ENCODE measurements at regions of chr17 and their contacts with region 1.

Region 1: GRCh38 chr17:8409966-8410864 is 12.6 kb upstream of the RNF222 start:
- DNase-seq: peak; percentile 89
- H3K4me3 ChIP-seq: peak overlapping the region; percentile 2 to 30 (median 24)
- H3K27ac ChIP-seq: peak overlapping the region; percentile 31
- H3K4me1 ChIP-seq: peaks cover 16% of the 10 kb centered on the region
- H3K27me3 ChIP-seq: no peaks in the 10 kb centered on the region
- CTCF ChIP-seq: peak; percentile 81 to 87

Region 2: GRCh38 chr17:8091033-8091687 is 319.1 kb before region 1 on chr17:
- CTCF ChIA-PET with region 1: interaction called, 10 read pairs
- dilution Hi-C with region 1: no loop called
- in situ Hi-C with region 1: no loop called
- intact Hi-C with region 1: no loop called
- DNase-seq: no peak
- H3K4me3 ChIP-seq: no peak overlapping the region
- H3K27ac ChIP-seq: no peak overlapping the region
- H3K4me1 ChIP-seq: peaks cover 8% of the 10 kb centered on the region
- H3K27me3 ChIP-seq: no peaks in the 10 kb centered on the region
- CTCF ChIP-seq: no peak

Region 3: DNA sequence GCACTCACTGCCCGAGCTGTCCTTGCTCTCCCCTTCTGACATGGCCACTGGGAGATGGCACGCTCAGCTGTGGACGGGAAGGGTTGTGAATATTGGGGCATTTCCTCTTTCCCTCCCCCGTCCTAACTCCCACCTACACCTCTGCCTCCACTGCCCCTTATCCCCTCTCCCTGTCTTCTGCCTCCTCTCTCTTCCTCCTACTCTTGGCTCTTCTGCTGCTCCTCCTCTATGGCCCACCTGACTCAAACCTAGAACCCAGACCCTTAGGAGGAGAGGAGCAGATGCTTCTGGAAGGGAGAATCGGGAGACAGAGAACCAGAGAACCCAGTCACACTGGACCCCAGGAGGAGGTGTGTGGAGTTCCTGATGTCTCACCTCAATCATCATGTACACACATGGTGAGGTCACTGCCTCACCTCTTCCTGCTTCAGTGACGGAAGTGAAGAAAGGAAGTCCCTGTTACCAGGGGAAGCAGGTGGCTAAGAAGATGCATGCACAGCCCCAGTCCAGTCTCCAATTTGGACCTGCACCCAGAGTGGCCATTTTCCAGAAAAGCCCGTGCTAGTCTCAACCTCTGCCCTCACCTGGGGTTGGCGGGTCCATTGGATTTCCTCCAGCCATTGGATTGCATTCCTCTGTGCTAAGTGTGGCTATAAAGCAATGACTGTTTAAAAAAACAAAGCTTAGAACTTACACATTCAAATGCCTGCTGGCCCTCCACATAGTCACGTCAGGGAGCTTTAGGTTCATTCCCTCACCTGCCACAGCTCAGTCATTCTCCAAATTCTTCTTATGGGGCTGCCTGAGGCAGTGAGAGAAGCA is 16.6 kb before region 1 on chr17:
- CTCF ChIA-PET with region 1: no interaction called
- dilution Hi-C with region 1: no loop called
- in situ Hi-C with region 1: no loop called
- intact Hi-C with region 1: loop called (anchors 2 kb)
- DNase-seq: peak; percentile 84
- H3K4me3 ChIP-seq: no peak overlapping the region
- H3K27ac ChIP-seq: peak overlapping the region; percentile 67
- H3K4me1 ChIP-seq: peaks cover 37% of the 10 kb centered on the region
- H3K27me3 ChIP-seq: no peaks in the 10 kb centered on the region
- CTCF ChIP-seq: no peak

Region 4: DNA sequence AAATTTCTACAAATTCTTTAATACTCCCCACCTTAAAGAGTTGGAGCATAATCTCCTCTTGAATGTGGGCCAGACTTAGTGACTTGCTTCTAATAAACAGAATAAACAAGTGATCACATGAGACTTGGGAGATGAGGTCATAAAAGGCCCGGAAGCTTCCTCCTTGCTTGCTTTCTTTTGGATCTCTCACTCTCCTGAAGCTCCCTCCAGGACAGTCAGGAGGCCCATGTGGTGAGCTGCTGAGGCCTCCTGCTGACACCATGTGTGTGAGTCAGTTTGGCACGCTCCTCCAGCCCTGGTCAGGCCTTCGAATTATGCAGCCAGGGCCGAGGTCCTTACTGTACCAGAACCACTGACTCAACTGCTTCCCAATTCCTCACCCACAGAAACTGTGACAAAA is 78.7 kb after region 1 on chr17:
- CTCF ChIA-PET with region 1: no interaction called
- dilution Hi-C with region 1: no loop called
- in situ Hi-C with region 1: no loop called
- intact Hi-C with region 1: loop called (anchors 1 kb)
- DNase-seq: peak; percentile 75
- H3K4me3 ChIP-seq: no peak overlapping the region
- H3K27ac ChIP-seq: no peak overlapping the region
- H3K4me1 ChIP-seq: peaks cover 6% of the 10 kb centered on the region
- H3K27me3 ChIP-seq: no peaks in the 10 kb centered on the region
- CTCF ChIP-seq: peak in 1 of 2 donors; percentile 25

Region 5: DNA sequence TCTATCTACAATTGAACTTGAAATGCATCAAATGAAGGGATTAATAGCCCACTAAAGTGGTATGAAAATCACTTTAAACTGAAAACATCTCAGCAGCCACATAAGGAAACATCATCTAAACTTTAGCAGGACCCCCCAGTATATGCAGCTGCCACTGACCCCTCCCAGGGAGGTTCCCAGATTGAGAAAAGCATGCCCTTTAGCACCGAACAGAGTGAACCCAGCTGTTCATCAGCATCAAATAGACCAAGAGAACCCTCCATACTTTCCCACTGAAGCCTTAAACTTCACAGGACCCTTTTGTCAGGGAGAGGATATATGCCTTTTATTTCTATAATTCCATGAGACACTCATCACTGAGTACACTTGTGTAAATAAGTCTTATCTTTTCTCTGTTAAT is 175.7 kb after region 1 on chr17:
- CTCF ChIA-PET with region 1: no interaction called
- dilution Hi-C with region 1: no loop called
- in situ Hi-C with region 1: no loop called
- intact Hi-C with region 1: no loop called
- DNase-seq: no peak
- H3K4me3 ChIP-seq: no peak overlapping the region
- H3K27ac ChIP-seq: no peak overlapping the region
- H3K4me1 ChIP-seq: peaks cover 12% of the 10 kb centered on the region
- H3K27me3 ChIP-seq: no peaks in the 10 kb centered on the region
- CTCF ChIP-seq: no peak

Region 6: DNA sequence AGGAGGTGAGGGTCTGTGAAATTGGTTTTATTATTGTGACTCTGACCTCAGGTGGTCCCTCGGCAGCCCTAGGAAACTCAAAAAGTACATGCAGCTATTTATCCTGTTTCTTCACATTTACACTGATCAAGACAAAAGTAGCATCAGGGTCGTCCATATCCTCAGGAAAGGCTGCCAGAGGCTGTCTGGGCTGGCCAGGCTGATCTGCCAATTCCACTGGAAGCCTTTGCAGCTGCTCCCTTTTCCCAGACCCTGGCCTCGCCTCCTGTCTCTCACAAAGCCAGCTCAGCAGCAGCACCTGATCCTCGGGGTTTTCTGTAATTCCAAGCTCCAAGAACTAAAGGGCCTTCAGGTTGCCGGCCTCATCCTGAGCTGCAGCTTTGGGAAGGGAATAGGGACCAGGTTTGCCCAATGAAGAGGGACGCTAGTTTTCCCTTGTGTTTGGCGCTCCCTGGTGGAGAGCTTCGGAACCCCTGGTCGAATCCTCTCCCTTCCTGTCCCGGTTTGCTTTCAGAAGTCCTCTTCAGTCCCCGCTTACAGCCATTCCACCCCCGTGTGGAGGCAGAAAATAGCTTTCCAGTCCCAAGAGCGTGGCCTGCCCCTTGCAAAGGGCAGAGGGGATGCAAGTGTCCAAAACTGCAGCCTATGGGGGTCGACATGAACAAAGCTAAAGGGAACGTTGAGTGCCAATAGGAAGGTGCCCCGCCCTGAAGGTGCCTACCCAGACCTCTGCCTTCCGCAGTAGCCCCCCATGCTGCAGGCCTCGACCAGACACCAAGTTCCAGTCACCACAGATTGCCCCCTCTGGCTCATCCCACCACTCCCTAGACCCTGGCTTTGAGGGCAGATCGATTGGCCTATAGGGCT is 375.6 kb after region 1 on chr17:
- CTCF ChIA-PET with region 1: no interaction called
- dilution Hi-C with region 1: no loop called
- in situ Hi-C with region 1: no loop called
- intact Hi-C with region 1: loop called (anchors 1 kb)
- DNase-seq: peak; percentile 45
- H3K4me3 ChIP-seq: no peak overlapping the region
- H3K27ac ChIP-seq: no peak overlapping the region
- H3K4me1 ChIP-seq: no peaks in the 10 kb centered on the region
- H3K27me3 ChIP-seq: no peaks in the 10 kb centered on the region
- CTCF ChIP-seq: peak; percentile 83 to 89